Posterior vena cava (tissue), 2 donors: ENCODE measurements at regions of chr10 and their contacts with region 1.

Region 1: DNA sequence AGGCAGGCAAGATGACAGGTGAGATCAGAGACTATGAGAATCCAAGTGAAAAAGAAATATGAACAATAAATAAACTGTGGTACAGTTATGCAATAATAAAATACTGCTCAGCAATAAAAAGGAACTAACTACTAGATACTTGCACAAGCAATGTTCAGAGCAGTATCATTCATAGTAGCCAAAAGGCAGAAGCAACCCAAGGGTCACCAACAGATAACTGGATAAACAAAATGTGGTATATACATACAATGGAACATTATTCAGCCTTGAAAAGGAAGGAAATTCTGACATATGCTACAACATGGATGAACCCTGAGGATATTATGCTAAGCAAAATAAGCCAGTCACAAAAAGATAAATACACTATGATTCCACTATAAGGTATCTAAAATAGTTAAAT is 76.9 kb upstream of the KCNIP2 start:
- DNase-seq: no peak

Region 2: GRCh38 chr10:101879456-101880231 is 40.9 kb before region 1 on chr10:
- intact Hi-C with region 1: loop called in 1 of 2 experiments (anchors 1 kb)
- DNase-seq: no peak

Region 3: DNA sequence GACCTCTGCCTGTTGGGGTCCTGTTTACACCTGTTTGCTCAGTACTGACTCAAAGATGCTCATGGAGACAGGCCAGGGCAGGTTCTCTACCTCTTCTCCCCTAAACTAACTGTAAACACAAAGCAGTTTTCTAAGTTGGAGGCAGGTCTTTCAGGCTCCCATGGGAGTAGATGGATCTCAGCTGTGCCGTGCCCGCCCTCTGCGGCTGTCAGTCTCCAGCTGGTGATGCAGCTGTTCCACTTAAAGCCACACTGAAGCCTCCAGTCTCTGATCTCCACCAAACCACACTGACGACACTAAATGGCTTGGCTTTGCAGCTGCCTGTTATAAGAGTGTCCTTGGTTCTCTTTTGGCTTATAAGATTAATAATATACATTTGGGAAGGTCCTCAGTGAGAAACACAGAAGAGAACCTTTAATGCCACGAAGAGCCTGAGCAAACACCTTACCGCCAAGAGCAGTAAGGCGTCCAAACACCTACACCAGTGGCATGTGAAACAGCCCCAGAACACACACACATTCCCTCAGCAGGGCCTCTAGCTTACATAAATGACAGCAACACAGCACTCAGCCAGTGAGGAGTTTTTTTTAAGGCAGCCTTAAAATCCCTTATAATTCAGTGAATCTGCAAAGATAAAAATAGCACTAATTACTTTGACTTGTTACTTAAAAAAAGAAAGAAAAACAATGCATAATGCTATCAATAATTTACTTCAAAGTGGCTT is 16.6 kb before region 1 on chr10:
- intact Hi-C with region 1: no loop called
- DNase-seq: no peak

Region 4: DNA sequence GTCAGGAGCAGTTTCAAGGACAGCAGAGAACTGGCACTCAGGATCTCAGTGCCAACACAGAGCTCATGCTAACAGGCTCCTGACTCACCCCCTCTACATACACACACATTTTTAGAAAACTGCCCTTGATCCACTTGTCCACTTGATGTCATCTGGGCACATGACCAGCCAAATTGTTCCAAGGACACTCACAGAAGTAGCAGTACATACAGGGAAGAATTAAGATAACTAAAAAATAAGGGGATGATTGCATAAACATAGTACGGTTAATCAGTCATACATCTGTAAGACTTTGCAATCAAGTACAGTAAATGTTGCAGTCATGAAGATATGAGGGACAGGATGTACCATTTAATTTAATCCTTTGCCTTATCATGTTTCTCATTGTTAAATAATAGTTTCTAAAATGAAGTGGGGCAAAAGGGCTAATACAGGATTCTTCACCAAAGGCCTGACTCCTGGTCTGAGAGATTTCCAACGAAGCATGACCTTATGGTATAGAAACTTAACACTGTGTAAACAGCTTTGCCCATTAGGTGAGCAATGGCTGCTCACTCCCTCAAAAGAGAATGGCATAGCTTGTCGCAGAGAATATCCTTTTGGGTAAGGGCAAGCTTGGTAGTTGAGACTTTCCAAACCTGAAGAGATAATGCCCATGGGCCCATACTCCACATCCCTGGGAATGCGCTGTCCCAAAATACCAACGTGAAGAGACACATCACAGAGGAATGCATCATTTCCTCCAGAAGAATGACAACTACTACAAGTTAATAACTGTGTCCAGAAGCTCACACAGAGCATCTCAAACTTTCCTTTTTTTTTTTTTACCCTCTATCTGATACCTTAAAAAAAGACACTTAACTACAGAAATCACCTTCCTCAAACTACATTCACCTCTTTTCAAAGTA is 41.3 kb after region 1 on chr10:
- intact Hi-C with region 1: no loop called
- DNase-seq: no peak